Ovary (tissue), 10 donors: ENCODE measurements at regions of chr10 and their contacts with region 1.

Region 1: GRCh38 chr10:32346134-32346550 is 816 bp downstream of the EPC1 start:
- DNase-seq: peak; percentile 96 to 97 (median 96)
- H3K4me3 ChIP-seq: peak overlapping the region; percentile 85
- H3K27ac ChIP-seq: peak overlapping the region; percentile 100
- H3K4me1 ChIP-seq: peaks cover 5% of the 10 kb centered on the region
- H3K27me3 ChIP-seq: no peaks in the 10 kb centered on the region
- CTCF ChIP-seq: peak; percentile 97 to 100 (median 97)
- EP300 ChIP-seq: no peak
- POLR2A ChIP-seq: no peak

Region 2: DNA sequence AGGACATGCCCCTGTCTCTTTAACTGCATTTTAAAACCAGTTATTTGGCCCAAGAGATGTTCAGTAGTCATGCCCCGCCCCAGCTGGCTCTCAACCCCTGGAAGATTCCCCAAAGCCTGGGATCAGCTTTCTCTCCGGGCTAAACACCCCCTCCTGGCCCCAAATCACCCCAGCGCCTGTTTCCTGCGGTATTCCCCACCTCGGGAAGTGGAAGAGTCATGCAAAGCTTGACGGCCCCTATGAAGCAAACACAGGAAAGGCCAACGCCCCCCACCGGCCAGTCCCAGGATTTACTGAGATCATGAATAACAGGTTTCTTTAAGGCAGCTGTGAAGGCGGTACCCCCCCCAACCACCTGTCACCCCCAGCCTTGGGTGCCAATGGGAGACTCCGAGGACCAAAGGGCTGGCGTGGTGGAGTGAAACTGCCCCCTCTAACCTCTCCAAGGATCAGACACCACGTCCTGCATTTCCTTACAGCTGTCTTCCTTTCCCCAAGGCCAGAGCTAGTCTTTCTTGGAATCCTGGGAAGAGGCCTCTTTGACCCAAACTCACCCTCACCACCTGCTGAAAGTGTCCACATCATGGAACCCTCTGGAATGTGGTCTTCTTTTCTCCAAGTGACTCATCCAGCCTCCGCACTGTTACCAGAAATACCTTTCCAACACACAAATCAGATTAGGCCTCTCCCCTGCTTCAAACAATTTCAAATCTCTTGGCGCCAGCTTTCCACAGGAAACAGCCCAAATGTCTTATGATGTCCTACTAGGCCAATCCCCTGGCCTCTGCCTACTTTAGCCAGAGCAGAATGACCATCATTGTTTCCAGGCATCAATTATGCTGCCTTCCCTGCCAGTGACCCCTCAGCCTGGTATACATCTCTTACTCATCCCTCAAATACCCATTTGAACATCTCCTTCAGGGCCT is 725.7 kb before region 1 on chr10:
- intact Hi-C with region 1: no loop called
- DNase-seq: peak in 4 of 5 donors; percentile 33 to 59 (median 46)
- H3K4me3 ChIP-seq: no peak overlapping the region
- H3K27ac ChIP-seq: peak overlapping the region in 1 of 2 donors; percentile 17
- H3K4me1 ChIP-seq: peaks cover 7% of the 10 kb centered on the region
- H3K27me3 ChIP-seq: no peaks in the 10 kb centered on the region
- CTCF ChIP-seq: no peak
- EP300 ChIP-seq: no peak
- POLR2A ChIP-seq: no peak

Region 3: DNA sequence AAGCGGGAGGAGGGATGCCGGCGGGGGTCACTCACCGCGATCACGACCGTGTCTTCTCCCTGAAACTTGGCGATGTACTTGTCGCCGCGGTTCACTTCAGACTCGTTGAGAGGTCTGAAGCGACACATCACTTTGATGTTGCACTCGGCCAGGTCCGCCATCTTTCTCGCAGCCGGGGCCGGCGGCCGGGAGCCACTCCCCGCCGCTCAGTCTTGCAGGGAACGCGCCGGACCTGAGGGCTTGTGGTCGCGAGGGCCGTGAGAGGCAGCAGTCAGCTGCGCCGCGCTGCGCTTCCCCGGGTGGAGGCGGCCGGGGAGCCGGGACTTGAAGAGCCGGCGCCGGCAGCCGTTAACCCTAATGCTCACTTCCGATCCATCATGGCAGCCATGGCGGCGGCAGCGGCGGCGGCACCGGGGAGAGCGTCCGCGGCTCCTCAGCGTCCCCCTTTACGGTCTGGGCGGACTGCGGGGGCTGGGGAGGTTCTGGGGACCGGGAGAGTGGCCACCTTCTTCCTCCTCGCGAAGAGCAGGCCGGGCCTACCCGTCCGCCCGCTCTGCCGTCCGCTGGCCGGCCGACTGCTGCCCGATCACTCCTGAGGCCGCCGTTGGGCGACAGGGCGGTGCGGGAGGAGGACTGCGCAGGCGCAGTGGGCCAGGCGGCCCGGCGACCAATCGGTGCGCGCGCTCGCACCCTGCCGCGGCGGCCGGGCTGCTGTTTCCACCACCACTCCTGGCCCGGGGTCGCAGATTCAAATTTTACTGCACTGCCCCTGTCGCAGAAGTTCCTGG is 290.1 kb before region 1 on chr10 and contains the start of gene KIF5B:
- intact Hi-C with region 1: loop called in 1 of 4 experiments (anchors 10 kb)
- DNase-seq: peak; percentile 85 to 93 (median 90)
- H3K4me3 ChIP-seq: peak within 1 kb of the TSS; percentile 97
- H3K27ac ChIP-seq: peak within 1 kb of the TSS; percentile 96 to 97
- H3K4me1 ChIP-seq: peaks cover 6% of the 10 kb centered on the region
- H3K27me3 ChIP-seq: no peaks in the 10 kb centered on the region
- CTCF ChIP-seq: peak in 2 of 3 donors; percentile 8 to 20
- EP300 ChIP-seq: no peak
- POLR2A ChIP-seq: peak; percentile 98
- total RNA-seq, gene KIF5B: 56.6 to 95.8 (median 64.6) TPM

Region 4: GRCh38 chr10:32256613-32257437 is 89.3 kb before region 1 on chr10:
- intact Hi-C with region 1: loop called in 2 of 4 experiments (anchors 5 to 10 kb)
- DNase-seq: peak; percentile 43 to 77 (median 72)
- H3K4me3 ChIP-seq: no peak overlapping the region
- H3K27ac ChIP-seq: no peak overlapping the region
- H3K4me1 ChIP-seq: peaks cover 1% of the 10 kb centered on the region
- H3K27me3 ChIP-seq: no peaks in the 10 kb centered on the region
- CTCF ChIP-seq: peak; percentile 58 to 80 (median 78)
- EP300 ChIP-seq: no peak
- POLR2A ChIP-seq: no peak

Region 5: DNA sequence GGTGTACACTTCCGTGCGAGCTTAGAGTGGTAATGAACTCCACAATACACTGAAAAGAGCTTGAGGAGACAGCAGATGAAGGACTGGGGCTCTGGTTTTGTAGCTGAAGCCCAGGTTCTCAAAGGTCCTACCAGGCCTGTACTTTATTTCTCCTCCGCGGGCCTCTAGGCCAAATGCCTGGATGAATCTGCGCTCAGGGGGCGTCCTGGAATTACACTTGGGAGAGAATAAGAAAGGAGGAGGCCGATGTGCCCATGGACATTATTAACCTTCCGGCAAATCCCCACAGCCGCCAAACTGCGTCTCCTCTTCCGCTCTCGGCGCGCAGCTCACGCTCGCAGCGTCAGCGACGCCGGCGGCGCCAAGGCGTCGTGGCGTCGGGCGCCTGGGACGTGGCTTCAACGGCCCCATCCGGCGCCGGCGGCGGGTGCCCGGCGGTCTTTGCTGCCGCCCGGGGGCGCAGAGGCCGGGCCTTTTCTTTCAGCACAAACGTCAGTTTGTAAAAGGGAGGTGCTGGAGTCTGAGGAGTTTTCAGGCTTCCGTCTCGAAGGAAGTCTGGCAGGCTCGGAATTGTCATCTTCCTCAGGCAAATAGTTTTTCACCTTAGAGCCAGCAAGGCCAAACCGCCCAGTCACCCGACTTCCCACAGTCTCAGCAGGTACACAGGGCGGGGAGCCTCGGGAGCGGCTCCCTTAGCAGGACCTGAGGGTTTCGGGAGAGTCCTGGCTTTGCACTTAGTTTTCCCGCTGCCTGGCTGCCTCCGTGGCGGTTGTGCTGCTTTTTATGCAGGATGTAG is 99.8 kb after region 1 on chr10 and contains the start of gene CCDC7:
- intact Hi-C with region 1: loop called in 1 of 4 experiments (anchors 1 kb)
- DNase-seq: peak; percentile 74 to 91 (median 79)
- H3K4me3 ChIP-seq: peak within 1 kb of the TSS; percentile 55
- H3K27ac ChIP-seq: peak within 1 kb of the TSS; percentile 75 to 98
- H3K4me1 ChIP-seq: no peaks in the 10 kb centered on the region
- H3K27me3 ChIP-seq: no peaks in the 10 kb centered on the region
- CTCF ChIP-seq: peak; percentile 34 to 50 (median 45)
- EP300 ChIP-seq: no peak
- POLR2A ChIP-seq: peak; percentile 28
- total RNA-seq, gene CCDC7: 33.3 to 83.4 (median 48.9) TPM

Region 6: DNA sequence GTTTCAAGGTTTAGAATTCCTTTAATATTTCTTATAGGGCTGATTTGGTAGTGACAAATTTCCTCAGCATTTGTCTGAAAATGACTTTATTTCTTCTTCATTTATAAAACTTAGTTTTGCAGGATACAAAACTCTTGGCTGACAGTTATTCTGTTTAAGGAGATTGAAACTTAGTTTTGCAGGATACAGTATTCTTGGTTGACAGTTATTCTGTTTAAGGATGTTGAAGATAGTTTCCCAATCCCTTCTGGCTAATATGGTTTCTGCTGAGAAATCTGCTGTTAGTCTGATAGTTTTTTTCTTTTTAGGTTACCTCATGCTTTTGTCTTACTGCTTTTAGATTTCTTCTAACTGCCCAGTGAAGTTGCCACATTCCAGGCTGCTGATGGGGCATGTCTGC is 425.1 kb after region 1 on chr10:
- intact Hi-C with region 1: no loop called
- DNase-seq: no peak
- H3K4me3 ChIP-seq: no peak overlapping the region
- H3K27ac ChIP-seq: no peak overlapping the region
- H3K4me1 ChIP-seq: no peaks in the 10 kb centered on the region
- H3K27me3 ChIP-seq: no peaks in the 10 kb centered on the region
- CTCF ChIP-seq: no peak
- EP300 ChIP-seq: no peak
- POLR2A ChIP-seq: no peak

Region 7: GRCh38 chr10:32958085-32959005 is 612.2 kb after region 1 on chr10 and contains the start of gene ITGB1:
- intact Hi-C with region 1: loop called in 1 of 4 experiments (anchors 5 kb)
- DNase-seq: peak; percentile 97 to 98 (median 98)
- H3K4me3 ChIP-seq: peak within 1 kb of the TSS; percentile 85
- H3K27ac ChIP-seq: peak within 1 kb of the TSS; percentile 86 to 97
- H3K4me1 ChIP-seq: peaks cover 14% of the 10 kb centered on the region
- H3K27me3 ChIP-seq: no peaks in the 10 kb centered on the region
- CTCF ChIP-seq: peak in 1 of 3 donors; percentile 28
- EP300 ChIP-seq: peak; percentile 53
- POLR2A ChIP-seq: peak; percentile 98
- total RNA-seq, gene ITGB1: 230 to 350 (median 276) TPM